Esophagus muscularis mucosa (tissue), 4 donors: ENCODE measurements at regions of chr16 and their contacts with region 1.

Region 1: GRCh38 chr16:22001591-22001990 is 675 bp upstream of the PDZD9 start:
- DNase-seq: no peak
- H3K4me3 ChIP-seq: no peak overlapping the region
- H3K27ac ChIP-seq: no peak overlapping the region
- H3K4me1 ChIP-seq: peaks cover 9 to 12% (median 10%) of the 10 kb centered on the region in 4 donors
- H3K27me3 ChIP-seq: no peaks in the 10 kb centered on the region
- CTCF ChIP-seq: no peak
- EP300 ChIP-seq: no peak
- POLR2A ChIP-seq: no peak

Region 2: GRCh38 chr16:21952793-21953540 is 48.6 kb before region 1 on chr16 and contains the start of gene UQCRC2:
- intact Hi-C with region 1: no loop called
- DNase-seq: peak; percentile 97
- H3K4me3 ChIP-seq: peak within 1 kb of the TSS; percentile 71 to 90 (median 80)
- H3K27ac ChIP-seq: peak within 1 kb of the TSS; percentile 87 to 94 (median 93)
- H3K4me1 ChIP-seq: peaks cover 40 to 62% (median 50%) of the 10 kb centered on the region in 4 donors
- H3K27me3 ChIP-seq: no peaks in the 10 kb centered on the region
- CTCF ChIP-seq: no peak
- EP300 ChIP-seq: no peak
- POLR2A ChIP-seq: peak; percentile 50
- total RNA-seq, gene UQCRC2: 147 to 209 (median 186) TPM

Region 3: GRCh38 chr16:22077700-22078313 is 76.2 kb after region 1 on chr16:
- intact Hi-C with region 1: loop called (anchors 1 kb)
- DNase-seq: no peak
- H3K4me3 ChIP-seq: no peak overlapping the region
- H3K27ac ChIP-seq: no peak overlapping the region
- H3K4me1 ChIP-seq: peaks cover 0 to 21% (median 7%) of the 10 kb centered on the region in 4 donors
- H3K27me3 ChIP-seq: no peaks in the 10 kb centered on the region
- CTCF ChIP-seq: peak; percentile 65 to 84 (median 77)
- EP300 ChIP-seq: no peak
- POLR2A ChIP-seq: no peak

Region 4: DNA sequence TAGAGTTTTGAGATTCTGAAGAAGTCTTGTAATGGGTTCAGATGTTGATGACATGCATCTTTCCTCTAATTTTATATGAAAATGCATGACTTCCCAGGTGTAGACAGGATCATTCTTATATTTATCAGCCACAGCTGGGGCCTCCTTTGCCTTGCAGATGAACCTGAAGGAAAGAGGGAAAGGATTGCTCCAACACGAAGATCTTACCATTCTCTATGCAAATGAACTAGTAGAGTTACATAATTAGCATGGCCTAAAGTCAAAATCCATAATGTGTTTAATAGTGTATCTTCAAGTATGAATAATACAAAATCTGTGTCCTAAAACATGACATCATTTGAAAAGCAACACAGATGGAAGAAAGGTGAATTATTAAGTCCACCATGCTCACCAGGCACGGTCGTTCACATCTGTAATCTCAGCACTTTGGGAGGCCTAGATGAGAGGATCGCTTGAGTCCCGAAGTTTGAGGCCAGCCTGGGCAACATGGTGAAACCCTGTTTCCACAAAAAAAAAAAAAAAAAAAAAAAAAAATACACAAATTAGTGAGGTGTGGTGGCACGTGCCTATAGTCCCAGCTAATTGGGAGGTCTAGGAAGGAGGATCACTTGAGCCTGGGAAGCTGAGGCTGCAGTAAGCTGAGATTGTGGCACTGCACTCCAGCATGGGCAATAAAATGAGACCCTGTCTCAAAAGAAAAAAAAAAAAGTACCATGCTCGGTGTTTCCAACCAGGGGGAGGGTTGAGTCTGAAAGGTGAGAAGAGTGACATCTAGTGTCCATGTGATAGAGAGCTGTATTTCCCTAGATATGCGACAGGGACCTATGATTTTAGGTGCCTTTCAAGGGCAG is 97.0 kb after region 1 on chr16:
- intact Hi-C with region 1: loop called (anchors 5 kb)
- DNase-seq: no peak
- H3K4me3 ChIP-seq: no peak overlapping the region
- H3K27ac ChIP-seq: no peak overlapping the region
- H3K4me1 ChIP-seq: peaks cover 0 to 5% (median 2%) of the 10 kb centered on the region in 4 donors
- H3K27me3 ChIP-seq: peaks cover 0 to 6% (median 0%) of the 10 kb centered on the region in 4 donors
- CTCF ChIP-seq: peak; percentile 31 to 53 (median 40)
- EP300 ChIP-seq: no peak
- POLR2A ChIP-seq: no peak

Region 5: DNA sequence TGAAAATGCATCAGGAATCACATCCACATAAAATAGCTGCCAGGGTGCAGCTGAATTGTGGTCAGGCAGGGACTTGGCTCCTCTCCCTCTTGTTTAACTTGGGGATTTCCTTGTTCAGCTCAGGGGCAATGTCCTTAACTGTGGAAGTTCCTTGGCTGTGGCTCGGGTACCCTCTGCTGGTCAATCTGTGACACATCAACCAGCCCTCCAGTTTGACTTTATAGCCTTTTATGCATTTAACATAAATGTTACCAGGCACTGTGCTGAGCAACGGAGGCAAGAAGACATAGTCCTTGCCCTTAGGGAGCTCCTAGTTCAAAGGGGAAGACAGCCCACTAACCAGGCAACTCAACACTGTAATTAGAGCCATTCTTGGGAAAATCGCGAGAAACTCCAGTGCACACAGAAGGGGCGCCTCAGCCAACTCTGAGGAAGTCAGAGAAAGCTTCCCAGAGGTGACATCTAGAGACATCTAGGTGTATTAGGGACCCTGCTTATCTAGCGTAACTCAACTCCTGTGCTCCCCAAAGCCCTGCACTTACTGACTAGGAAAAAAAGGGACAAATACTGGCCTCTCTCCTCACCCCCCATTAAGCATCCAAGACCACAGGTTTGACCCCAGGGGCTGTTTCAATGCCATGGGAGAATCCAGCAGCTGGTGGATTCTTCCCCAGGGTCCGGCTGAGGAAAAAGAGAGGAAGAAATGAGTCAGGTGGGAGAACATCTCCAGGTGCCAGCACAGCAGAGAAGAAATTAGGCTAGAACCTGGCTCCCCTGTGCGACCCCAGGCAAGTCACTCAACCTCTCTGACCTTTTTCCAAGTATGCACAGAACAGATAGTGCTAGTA is 187.2 kb after region 1 on chr16:
- intact Hi-C with region 1: loop called (anchors 1 kb)
- DNase-seq: no peak
- H3K4me3 ChIP-seq: peak overlapping the region in 2 of 4 donors; percentile 79 to 86
- H3K27ac ChIP-seq: peak overlapping the region; percentile 94 to 96 (median 94)
- H3K4me1 ChIP-seq: peaks cover 21 to 41% (median 37%) of the 10 kb centered on the region in 4 donors
- H3K27me3 ChIP-seq: no peaks in the 10 kb centered on the region
- CTCF ChIP-seq: peak; percentile 81 to 92 (median 90)
- EP300 ChIP-seq: no peak
- POLR2A ChIP-seq: no peak

Region 6: GRCh38 chr16:22297114-22297878 is 295.7 kb after region 1 on chr16 and contains the start of gene POLR3E:
- intact Hi-C with region 1: loop called (anchors 5 kb)
- DNase-seq: peak; percentile 100
- H3K4me3 ChIP-seq: peak within 1 kb of the TSS; percentile 85 to 93 (median 90)
- H3K27ac ChIP-seq: peak within 1 kb of the TSS; percentile 92 to 96 (median 96)
- H3K4me1 ChIP-seq: peaks cover 21 to 40% (median 39%) of the 10 kb centered on the region in 4 donors
- H3K27me3 ChIP-seq: peaks cover 0 to 4% (median 0%) of the 10 kb centered on the region in 4 donors
- CTCF ChIP-seq: peak; percentile 92 to 99 (median 96)
- EP300 ChIP-seq: no peak
- POLR2A ChIP-seq: no peak
- total RNA-seq, gene POLR3E: 39.9 to 50.7 (median 49.0) TPM